Activated B cell treated with CpG ODN at 0.5 μM for 24 hours (primary cell): ENCODE measurements at regions of chr6 and their contacts with region 1.

Region 1: DNA sequence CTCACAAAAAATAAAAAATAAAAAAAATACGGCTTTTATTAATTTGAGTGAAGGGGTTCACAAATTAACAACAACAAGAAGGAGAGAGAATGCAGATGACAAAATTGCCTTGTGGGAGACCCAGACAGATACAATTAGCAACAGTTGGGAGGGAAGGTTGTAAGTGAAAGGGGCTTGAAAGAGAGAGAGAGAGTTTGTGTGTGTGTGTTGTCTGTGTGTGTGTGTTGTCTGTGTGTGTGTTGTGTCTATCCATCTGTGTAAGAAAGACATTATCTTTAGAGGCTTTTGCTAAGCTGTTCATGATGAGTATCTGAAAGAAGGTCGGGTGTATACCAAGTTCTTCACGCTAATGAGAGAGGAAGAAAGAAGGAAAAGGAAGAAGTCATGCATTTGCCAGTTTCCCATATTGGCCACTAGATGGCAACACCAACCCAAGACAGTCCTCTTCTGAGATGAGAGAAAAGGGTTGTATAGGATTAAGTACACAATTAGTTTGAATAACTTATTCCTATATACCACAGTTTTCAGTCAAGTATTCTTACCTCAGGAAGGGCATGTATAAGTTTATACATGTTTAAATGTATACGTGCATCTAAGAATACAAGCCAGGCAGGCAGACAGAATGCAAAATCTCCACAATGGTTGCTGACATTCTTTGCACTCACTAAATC is 63.7 kb upstream of the CD2AP start:
- DNase-seq: no peak
- ATAC-seq: peak; percentile 79
- H3K4me3 Mint-ChIP-seq: peak overlapping the region; percentile 79
- H3K27ac Mint-ChIP-seq: no peak overlapping the region
- H3K4me1 Mint-ChIP-seq: peaks cover 17% of the 10 kb centered on the region
- H3K27me3 Mint-ChIP-seq: no peaks in the 10 kb centered on the region
- CTCF ChIP-seq: no peak

Region 2: DNA sequence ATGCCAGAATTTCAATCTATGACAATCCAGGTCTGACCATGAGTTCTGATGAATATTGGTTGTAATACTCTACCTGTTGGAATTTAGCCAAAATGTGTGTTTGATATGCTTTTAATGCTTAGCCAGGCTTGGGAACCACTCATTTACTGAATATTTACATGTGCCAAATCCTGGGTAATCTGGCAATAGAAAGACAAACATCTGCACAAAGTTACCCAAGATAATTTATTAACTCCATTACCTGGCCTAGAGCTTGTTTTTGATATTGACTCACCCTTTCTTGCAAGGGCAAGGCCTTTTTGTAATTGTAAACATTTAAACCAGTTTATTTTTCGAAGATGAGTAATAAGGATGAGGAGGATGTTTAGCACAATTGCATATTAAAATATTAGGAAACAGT is 50.2 kb after region 1 on chr6:
- CTCF ChIA-PET with region 1: no interaction called
- POLR2A ChIA-PET with region 1: interaction called, 7 read pairs
- intact Hi-C with region 1: loop called (anchors 5 kb)
- DNase-seq: no peak
- ATAC-seq: no peak
- H3K4me3 Mint-ChIP-seq: no peak overlapping the region
- H3K27ac Mint-ChIP-seq: no peak overlapping the region
- H3K4me1 Mint-ChIP-seq: peaks cover 18% of the 10 kb centered on the region
- H3K27me3 Mint-ChIP-seq: no peaks in the 10 kb centered on the region
- CTCF ChIP-seq: no peak

Region 3: GRCh38 chr6:47579040-47579439 is 165.2 kb after region 1 on chr6:
- CTCF ChIA-PET with region 1: interaction called, 3 read pairs
- POLR2A ChIA-PET with region 1: no interaction called
- intact Hi-C with region 1: loop called (anchors 5 kb)
- DNase-seq: no peak
- ATAC-seq: no peak
- H3K4me3 Mint-ChIP-seq: no peak overlapping the region
- H3K27ac Mint-ChIP-seq: no peak overlapping the region
- H3K4me1 Mint-ChIP-seq: no peaks in the 10 kb centered on the region
- H3K27me3 Mint-ChIP-seq: no peaks in the 10 kb centered on the region
- CTCF ChIP-seq: no peak

Region 4: GRCh38 chr6:47631269-47631772 is 217.4 kb after region 1 on chr6:
- CTCF ChIA-PET with region 1: interaction called, 22 read pairs
- POLR2A ChIA-PET with region 1: no interaction called
- intact Hi-C with region 1: loop called (anchors 1 kb)
- DNase-seq: no peak
- ATAC-seq: no peak
- H3K4me3 Mint-ChIP-seq: no peak overlapping the region
- H3K27ac Mint-ChIP-seq: no peak overlapping the region
- H3K4me1 Mint-ChIP-seq: peaks cover 2% of the 10 kb centered on the region
- H3K27me3 Mint-ChIP-seq: no peaks in the 10 kb centered on the region
- CTCF ChIP-seq: no peak

Region 5: DNA sequence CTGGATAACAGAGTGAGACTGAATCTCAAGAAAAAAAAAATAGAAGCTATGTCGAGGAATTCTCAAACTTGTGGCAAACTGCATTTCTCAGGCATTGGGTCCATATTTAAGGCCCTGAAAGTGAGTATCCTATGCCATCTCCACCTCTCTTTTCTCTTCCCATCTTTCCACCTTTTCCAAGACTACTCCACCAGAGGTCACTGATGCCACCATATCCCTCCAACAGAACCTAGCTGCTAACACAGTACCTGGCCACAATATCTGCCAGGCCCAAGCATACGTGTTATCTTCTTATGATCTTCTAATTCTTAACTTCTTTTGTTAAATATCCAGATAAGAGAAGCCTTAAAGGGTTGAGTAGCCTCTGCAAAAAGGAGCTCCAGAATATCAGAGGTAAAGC is 276.3 kb after region 1 on chr6:
- CTCF ChIA-PET with region 1: no interaction called
- POLR2A ChIA-PET with region 1: no interaction called
- intact Hi-C with region 1: no loop called
- DNase-seq: no peak
- ATAC-seq: no peak
- H3K4me3 Mint-ChIP-seq: no peak overlapping the region
- H3K27ac Mint-ChIP-seq: no peak overlapping the region
- H3K4me1 Mint-ChIP-seq: no peaks in the 10 kb centered on the region
- H3K27me3 Mint-ChIP-seq: peaks cover 8% of the 10 kb centered on the region
- CTCF ChIP-seq: no peak

Region 6: GRCh38 chr6:47780510-47781356 is 366.8 kb after region 1 on chr6:
- CTCF ChIA-PET with region 1: interaction called, 26 read pairs
- POLR2A ChIA-PET with region 1: no interaction called
- intact Hi-C with region 1: loop called (anchors 1 kb)
- DNase-seq: no peak
- ATAC-seq: peak; percentile 69
- H3K4me3 Mint-ChIP-seq: no peak overlapping the region
- H3K27ac Mint-ChIP-seq: no peak overlapping the region
- H3K4me1 Mint-ChIP-seq: peaks cover 5% of the 10 kb centered on the region
- H3K27me3 Mint-ChIP-seq: peaks cover 13% of the 10 kb centered on the region
- CTCF ChIP-seq: no peak